ENCODE measurements at regions of chr6 and their contacts with region 1.

Region 1: GRCh38 chr6:125956506-125957390 is at the start of gene HINT3:
- DNase-seq: peak; percentile 94
- H3K4me3 Mint-ChIP-seq: no peak within 1 kb of the TSS
- H3K27ac Mint-ChIP-seq: peak within 1 kb of the TSS; percentile 57
- H3K4me1 Mint-ChIP-seq: peaks cover 20% of the 10 kb centered on the region
- H3K27me3 Mint-ChIP-seq: no peaks in the 10 kb centered on the region
- CTCF ChIP-seq: peak; percentile 85
- total RNA-seq, gene HINT3: 13.9 and 15.1 TPM in 2 replicates

Region 2: DNA sequence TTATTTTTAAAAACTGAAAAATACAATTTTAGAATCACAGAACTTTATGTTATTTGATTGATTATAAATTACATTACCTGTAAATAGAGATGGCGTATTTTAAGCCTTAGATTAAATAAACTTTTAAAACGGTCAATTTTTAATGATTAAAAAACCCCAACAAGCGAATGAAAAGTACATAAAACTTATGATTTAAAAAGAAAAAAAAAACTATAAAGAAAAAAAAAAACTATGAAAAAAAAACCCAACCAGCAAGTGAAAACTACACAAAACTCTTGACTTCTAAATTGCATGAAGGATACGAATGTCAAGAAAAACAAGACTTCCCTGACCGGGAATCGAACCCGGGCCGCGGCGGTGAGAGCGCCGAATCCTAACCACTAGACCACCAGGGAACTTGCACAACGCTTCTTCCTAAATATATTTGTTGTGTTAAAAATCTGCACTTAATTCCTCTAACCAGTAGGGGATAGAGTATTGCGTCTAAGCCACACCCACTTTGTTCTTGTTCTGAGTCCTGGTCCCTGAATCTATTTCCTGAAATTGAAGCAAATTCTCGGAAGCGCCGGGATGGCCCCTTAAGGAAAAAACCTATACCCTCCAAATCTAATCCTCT is 176.7 kb before region 1 on chr6:
- CTCF ChIA-PET with region 1: interaction called, 14 read pairs
- intact Hi-C with region 1: no loop called
- DNase-seq: peak; percentile 75
- H3K4me3 Mint-ChIP-seq: no peak overlapping the region
- H3K27ac Mint-ChIP-seq: no peak overlapping the region
- H3K4me1 Mint-ChIP-seq: peaks cover 27% of the 10 kb centered on the region
- H3K27me3 Mint-ChIP-seq: no peaks in the 10 kb centered on the region
- CTCF ChIP-seq: no peak

Region 3: DNA sequence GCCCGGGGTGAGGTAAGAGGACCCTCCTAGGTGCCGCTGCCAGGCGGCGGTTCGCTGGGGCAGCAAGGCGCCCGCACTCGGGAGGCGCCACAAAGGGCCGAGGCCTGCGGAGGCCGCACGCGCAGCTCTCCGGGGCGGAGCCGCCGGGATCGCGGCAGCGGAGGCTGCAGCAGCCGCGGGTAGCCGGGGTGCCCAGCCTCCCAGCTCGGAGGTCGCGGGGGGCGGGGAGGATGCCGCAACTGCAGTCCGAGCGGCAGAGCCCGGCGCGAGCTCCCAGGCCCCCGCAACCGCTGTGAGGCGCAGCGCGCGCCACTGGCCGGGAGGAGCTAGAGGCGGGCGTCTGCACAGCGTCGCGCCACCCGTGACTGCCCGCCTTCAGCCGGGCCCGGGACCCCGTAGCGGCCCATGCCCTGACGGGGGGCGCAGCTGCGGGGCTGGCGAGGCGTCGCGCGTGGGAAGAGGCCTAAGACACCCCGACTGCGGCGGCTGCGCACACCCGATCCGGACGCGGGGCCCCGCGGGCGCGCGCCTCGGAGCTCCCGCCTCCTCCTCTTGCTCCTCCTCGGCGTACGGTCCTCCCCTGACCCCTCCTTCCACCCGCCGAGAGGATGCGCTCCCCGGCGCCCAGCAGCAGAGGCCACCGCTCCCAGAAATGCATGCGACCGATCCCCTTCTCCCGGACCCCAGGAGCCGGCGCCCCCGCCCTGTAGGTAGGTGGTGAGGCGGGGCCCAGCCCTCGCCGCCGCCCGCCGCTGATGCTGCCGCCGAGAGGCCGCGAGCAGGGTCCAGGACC is 166.2 kb before region 1 on chr6 and contains the start of gene NCOA7:
- CTCF ChIA-PET with region 1: interaction called, 5 read pairs
- intact Hi-C with region 1: loop called (anchors 2 kb)
- DNase-seq: peak; percentile 68
- H3K4me3 Mint-ChIP-seq: peak within 1 kb of the TSS; percentile 78
- H3K27ac Mint-ChIP-seq: peak within 1 kb of the TSS; percentile 54
- H3K4me1 Mint-ChIP-seq: peaks cover 23% of the 10 kb centered on the region
- H3K27me3 Mint-ChIP-seq: no peaks in the 10 kb centered on the region
- CTCF ChIP-seq: no peak
- total RNA-seq, gene NCOA7: 97.1 and 102 TPM in 2 replicates

Region 4: GRCh38 chr6:125899726-125900182 is 57.0 kb before region 1 on chr6:
- CTCF ChIA-PET with region 1: interaction called, 10 read pairs
- intact Hi-C with region 1: no loop called
- DNase-seq: peak; percentile 17
- H3K4me3 Mint-ChIP-seq: peak overlapping the region; percentile 26
- H3K27ac Mint-ChIP-seq: peak overlapping the region; percentile 73
- H3K4me1 Mint-ChIP-seq: peaks cover 29% of the 10 kb centered on the region
- H3K27me3 Mint-ChIP-seq: no peaks in the 10 kb centered on the region
- CTCF ChIP-seq: no peak

Region 5: DNA sequence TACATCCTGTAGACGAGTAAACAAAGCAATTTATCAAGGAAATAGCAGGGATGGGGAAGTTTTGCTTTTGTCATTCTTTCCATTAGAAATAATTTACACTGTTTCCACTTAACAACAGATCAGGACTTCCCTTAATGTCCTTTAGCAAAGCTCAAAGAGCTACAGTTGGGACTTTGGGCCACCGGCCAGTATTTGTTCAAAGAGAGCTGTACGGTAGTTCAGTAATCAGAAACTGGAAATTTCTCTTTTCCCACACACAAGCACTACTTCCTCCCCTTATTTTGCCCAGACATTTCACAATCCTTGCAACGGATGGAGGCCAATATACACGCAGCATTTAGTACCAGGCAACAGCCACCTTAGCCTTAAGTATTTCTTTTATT is 12.3 kb before region 1 on chr6:
- CTCF ChIA-PET with region 1: interaction called, 18 read pairs
- intact Hi-C with region 1: no loop called
- DNase-seq: peak; percentile 59
- H3K4me3 Mint-ChIP-seq: no peak overlapping the region
- H3K27ac Mint-ChIP-seq: peak overlapping the region; percentile 95
- H3K4me1 Mint-ChIP-seq: peaks cover 53% of the 10 kb centered on the region
- H3K27me3 Mint-ChIP-seq: no peaks in the 10 kb centered on the region
- CTCF ChIP-seq: no peak

Measured in Calu3 (cell line).